Naive thymus-derived CD8-positive, alpha-beta T cell (primary cell): ENCODE measurements at regions of chr11 and their contacts with region 1.

Region 1: DNA sequence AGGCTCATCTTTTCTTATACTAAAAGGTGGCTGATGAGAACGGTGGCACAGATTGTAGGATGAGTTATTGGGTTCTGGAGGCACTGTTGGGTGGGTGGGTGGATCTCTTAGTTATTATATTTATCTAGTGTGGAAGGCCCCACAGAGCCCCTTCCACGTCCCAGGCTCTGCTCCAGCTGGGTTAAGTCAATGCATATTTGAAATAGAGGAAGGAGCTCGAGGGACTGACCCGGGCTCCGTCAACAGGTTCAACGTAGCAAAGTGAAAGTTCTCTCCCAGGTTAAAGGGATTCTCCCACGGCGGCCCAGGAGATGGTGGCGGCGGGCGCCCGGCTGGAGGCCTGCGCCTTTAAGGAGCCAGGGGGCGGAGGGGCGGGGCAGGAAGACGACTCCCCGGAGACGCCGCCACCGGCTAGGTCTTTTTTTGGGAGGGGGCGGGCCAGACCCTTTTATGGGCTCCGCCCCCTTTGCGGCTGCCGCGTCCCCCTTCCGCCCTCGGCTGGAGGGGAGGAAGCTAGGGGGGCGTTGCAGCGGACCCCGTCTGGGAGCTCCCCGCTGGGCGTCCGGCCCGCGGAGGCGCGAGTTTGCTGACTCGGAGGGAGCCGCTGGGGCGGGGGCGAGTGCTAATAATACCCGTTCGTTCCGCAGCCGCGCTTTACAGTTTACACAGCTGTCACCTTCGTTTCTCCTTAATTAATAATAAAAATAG is 1.5 kb upstream of the INPPL1 start:
- DNase-seq: peak; percentile 87 to 95 (median 90)
- ATAC-seq: peak; percentile 70 to 75
- H3K4me3 Mint-ChIP-seq: peak overlapping the region; percentile 89 to 94 (median 92)
- H3K27ac Mint-ChIP-seq: peak overlapping the region; percentile 82 to 97 (median 94)
- H3K4me1 Mint-ChIP-seq: peaks cover 21 to 43% (median 33%) of the 10 kb centered on the region in 4 donors
- H3K27me3 Mint-ChIP-seq: peaks cover 0 to 6% (median 5%) of the 10 kb centered on the region in 5 donors

Region 2: DNA sequence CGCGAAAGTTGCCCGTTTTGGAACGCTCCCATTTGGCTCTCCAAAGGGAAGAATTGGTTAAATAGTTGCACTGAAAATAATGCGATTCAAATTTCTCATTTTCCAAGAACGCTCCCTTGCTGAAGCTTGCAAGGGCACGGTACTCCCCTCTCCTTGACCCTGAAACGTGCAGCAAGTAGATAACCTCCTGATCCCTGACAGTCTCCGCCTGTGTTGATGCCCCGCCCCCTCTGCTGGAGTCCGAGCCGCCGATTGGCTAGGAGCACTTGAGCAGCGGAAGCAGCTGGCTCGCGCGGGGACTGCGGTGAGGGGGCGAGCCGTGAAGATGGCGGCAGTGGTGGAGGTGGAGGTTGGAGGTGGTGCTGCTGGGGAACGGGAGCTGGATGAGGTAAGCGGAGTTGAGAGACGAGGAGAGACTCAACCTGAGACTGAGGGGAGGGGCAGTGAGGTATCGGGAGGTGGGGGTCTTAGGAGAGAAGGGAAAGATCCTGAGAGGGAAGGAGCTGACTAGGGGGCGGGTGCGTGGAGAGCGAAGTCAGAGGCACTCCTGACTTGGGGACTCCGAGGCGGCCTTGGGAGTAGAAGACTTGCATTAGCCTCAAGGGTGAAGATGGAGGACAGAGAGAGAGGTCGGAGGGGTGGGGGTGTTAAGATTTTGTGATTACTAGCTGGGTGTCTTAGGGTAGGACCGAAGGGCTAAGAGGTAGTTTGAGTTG is 294.2 kb before region 1 on chr11 and contains the start of gene RNF121:
- POLR2A ChIA-PET with region 1: interaction called, 11 read pairs
- DNase-seq: peak; percentile 94 to 99 (median 97)
- ATAC-seq: peak; percentile 90 to 92
- H3K4me3 Mint-ChIP-seq: peak within 1 kb of the TSS; percentile 94 to 99 (median 98)
- H3K27ac Mint-ChIP-seq: peak within 1 kb of the TSS; percentile 97 to 100 (median 99)
- H3K4me1 Mint-ChIP-seq: peaks cover 25 to 57% (median 55%) of the 10 kb centered on the region in 4 donors
- H3K27me3 Mint-ChIP-seq: no peaks in the 10 kb centered on the region
- polyA plus RNA-seq, gene RNF121: 5.7 to 9.4 (median 7.7) TPM

Region 3: GRCh38 chr11:72112321-72113219 is 110.5 kb before region 1 on chr11 and contains the start of gene ANAPC15:
- POLR2A ChIA-PET with region 1: interaction called, 17 read pairs
- DNase-seq: peak; percentile 79 to 100 (median 99)
- ATAC-seq: peak; percentile 88 to 90
- H3K4me3 Mint-ChIP-seq: peak within 1 kb of the TSS; percentile 87 to 100 (median 96)
- H3K27ac Mint-ChIP-seq: peak within 1 kb of the TSS; percentile 95 to 99 (median 98)
- H3K4me1 Mint-ChIP-seq: peaks cover 22 to 28% (median 25%) of the 10 kb centered on the region in 4 donors
- H3K27me3 Mint-ChIP-seq: peaks cover 0 to 8% (median 4%) of the 10 kb centered on the region in 5 donors
- polyA plus RNA-seq, gene ANAPC15: 81.7 to 102 (median 90.1) TPM

Region 4: GRCh38 chr11:72238040-72238450 is 15.0 kb after region 1 on chr11:
- POLR2A ChIA-PET with region 1: interaction called, 11 read pairs
- DNase-seq: peak in 7 of 10 donors; percentile 18 to 50 (median 40)
- ATAC-seq: peak; percentile 60 to 70
- H3K4me3 Mint-ChIP-seq: no peak overlapping the region
- H3K27ac Mint-ChIP-seq: no peak overlapping the region
- H3K4me1 Mint-ChIP-seq: peaks cover 26 to 43% (median 35%) of the 10 kb centered on the region in 4 donors
- H3K27me3 Mint-ChIP-seq: peaks cover 21 to 40% (median 28%) of the 10 kb centered on the region in 5 donors

Region 5: GRCh38 chr11:72327606-72328005 is 104.5 kb after region 1 on chr11:
- POLR2A ChIA-PET with region 1: no interaction called
- DNase-seq: no peak
- ATAC-seq: no peak
- H3K4me3 Mint-ChIP-seq: no peak overlapping the region
- H3K27ac Mint-ChIP-seq: no peak overlapping the region
- H3K4me1 Mint-ChIP-seq: peaks cover 3 to 5% (median 4%) of the 10 kb centered on the region in 4 donors
- H3K27me3 Mint-ChIP-seq: no peaks in the 10 kb centered on the region

Region 6: GRCh38 chr11:72683782-72684200 is 460.7 kb after region 1 on chr11:
- POLR2A ChIA-PET with region 1: no interaction called
- DNase-seq: peak; percentile 43 to 76 (median 60)
- ATAC-seq: peak; percentile 79 to 81
- H3K4me3 Mint-ChIP-seq: no peak overlapping the region
- H3K27ac Mint-ChIP-seq: peak overlapping the region in 5 of 10 donors; percentile 16 to 63 (median 52)
- H3K4me1 Mint-ChIP-seq: peaks cover 13 to 33% (median 26%) of the 10 kb centered on the region in 4 donors
- H3K27me3 Mint-ChIP-seq: no peaks in the 10 kb centered on the region